ENCODE measurements at regions of chr7 and their contacts with region 1.

Region 1: DNA sequence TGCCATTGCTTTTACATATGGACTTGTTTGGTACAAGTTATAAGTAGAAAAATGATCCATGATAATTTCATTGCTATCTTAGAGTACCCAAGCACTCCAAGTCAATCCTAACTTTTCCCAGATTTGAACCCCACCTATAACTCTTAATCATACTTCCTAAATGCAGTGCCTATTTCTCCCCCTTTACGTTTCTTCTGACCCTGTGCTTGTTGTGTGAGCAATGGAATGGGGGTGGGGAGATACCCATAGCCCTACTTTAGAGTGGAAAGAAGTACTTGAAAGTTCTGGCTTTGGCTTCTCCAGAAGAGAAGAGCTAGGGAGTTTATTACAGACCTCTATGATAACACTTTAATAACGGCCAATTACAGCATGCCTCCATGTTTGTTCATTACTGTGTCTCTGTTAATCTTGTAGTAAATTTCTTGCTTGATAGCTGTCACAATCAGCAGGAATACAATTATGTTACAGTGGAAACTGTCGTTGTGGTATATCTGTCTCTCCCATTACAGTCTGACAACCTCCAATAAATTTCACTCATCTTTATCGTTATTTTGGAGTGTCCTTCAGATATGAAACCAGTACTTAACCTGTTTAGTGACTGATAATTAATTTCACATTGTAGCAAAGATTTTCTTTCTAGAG is 34.0 kb downstream of the CNPY1 start:
- DNase-seq: no peak
- H3K4me3 Mint-ChIP-seq: no peak overlapping the region
- H3K27ac Mint-ChIP-seq: no peak overlapping the region
- H3K4me1 Mint-ChIP-seq: peaks cover 6% of the 10 kb centered on the region
- H3K27me3 Mint-ChIP-seq: peaks cover 51% of the 10 kb centered on the region

Region 2: DNA sequence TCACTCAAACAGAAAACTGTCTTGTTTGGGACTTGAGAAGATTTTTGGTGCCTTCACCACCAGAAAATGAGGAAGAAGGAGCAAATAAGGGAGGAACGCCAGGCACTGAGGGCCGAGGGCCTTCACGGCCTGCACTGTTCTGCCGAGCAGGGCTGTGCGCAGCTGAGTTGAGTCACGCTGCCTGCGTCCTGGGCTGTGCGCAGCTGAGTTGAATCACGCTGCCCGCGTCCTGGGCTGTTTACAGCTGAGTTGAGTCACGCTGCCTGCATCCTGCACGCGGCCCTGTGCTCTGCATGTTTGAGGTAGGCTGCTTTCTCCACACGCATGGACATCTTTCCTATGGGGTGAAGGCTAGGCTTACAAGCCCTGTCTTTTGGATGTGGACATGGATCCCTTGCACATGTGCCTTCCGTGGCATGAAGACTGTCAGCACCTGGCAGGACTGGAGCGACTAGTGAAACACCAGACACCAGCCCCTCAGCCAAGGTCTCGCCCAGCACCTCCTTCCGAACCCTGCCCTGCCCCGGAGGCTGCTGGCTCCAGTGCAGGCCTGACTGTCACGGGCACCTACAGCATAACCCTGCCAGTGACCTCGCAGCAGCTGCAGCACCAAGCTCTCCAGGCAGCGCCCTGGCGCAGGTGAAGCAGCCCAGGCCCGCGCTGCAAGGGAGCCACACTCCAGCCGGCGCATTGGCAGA is 345.5 kb before region 1 on chr7:
- intact Hi-C with region 1: no loop called
- DNase-seq: no peak
- H3K4me3 Mint-ChIP-seq: no peak overlapping the region
- H3K27ac Mint-ChIP-seq: no peak overlapping the region
- H3K4me1 Mint-ChIP-seq: no peaks in the 10 kb centered on the region
- H3K27me3 Mint-ChIP-seq: peaks cover 10% of the 10 kb centered on the region

Region 3: GRCh38 chr7:155533827-155534690 is 21.7 kb after region 1 on chr7:
- intact Hi-C with region 1: loop called (anchors 2 kb)
- DNase-seq: no peak
- H3K4me3 Mint-ChIP-seq: no peak overlapping the region
- H3K27ac Mint-ChIP-seq: no peak overlapping the region
- H3K4me1 Mint-ChIP-seq: peaks cover 11% of the 10 kb centered on the region
- H3K27me3 Mint-ChIP-seq: peaks cover 61% of the 10 kb centered on the region

Measured in activated T-helper 1 cell treated with anti-CD3 and anti-CD28 coated beads, Interleukin-12 subunit alpha, Interleukin-12 subunit beta, Interleukin-2, Interleukin-4 antibody, amounts not matched to agents 30 ng/mL and 10 ng/mL and 1 ng/mL, durations not matched to agents 14 hours and 24 hours and 36 hours (primary cell).